HepG2 (cell line): ENCODE measurements at regions of chr1 and their contacts with region 1.

Region 1: DNA sequence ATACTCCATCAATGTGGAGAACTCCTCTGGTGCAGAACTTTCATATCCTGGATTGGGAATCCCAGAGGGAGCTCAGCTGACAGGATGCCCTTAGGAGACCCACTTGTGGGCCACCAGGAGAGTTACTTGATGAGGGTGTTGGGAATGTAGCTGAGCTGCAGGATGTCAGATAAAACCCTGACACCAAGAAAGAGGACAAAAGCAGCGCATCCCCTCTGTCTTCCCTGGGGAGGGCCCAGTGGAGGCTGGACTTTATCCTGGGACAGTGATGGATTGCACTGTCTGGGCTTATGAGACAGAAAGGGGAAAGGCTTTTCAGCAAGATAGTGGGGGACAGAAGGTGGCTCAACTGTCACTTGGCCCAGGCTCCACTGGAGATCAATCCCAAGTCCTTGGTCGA is 88.1 kb upstream of the BCAR3 start:
- DNase-seq: no peak
- ATAC-seq: no peak
- H3K4me3 ChIP-seq: no peak overlapping the region
- H3K27ac ChIP-seq: peak overlapping the region; percentile 65
- H3K4me1 ChIP-seq: peaks cover 52% of the 10 kb centered on the region
- H3K27me3 ChIP-seq: no peaks in the 10 kb centered on the region
- CTCF ChIP-seq: no peak
- EP300 ChIP-seq: no peak
- POLR2A ChIP-seq: no peak
- RAD21 ChIP-seq: no peak

Region 2: DNA sequence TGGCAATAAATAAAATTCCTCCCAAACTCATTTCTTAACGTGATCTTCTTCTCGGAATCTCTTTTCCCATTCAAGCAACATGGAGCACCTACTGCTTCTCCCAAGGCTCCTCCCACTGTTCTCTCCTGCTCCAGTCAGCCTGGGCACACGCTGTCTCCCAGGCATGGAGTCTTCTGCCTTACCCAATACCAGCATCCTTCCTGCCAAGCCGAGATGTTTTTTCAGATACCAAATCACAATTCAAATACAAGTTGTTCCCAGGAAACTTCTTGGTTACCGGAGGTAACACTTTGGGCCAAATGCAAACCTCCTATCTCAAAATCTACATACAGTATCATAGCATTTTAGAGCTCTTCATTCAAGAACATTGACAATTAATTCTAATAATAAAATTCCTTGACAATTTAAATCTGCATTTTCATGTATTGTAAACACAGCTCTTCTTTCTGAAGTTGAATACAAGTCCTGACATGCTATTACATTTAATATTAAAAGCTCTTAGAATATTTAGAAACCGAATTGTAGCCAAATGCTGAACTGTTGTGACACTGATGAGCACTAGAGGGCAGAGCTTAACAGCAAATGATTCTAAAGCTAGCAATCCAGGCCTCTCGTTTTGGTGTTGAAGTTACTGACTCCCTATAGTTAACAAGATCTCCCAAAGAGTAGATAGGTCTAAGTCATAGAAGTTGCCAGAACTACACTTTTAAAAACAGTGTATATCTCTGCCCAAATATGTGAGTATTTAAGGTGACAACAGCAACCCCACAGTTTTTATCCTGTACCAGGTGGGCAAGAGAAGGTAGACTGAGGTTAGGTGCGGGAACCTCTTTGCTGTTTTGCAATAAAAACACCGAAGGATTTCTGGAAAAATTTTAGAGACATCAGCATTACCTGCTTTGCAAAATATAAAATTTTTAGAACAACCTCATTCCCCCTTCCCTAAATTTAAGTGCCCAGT is 140.4 kb before region 1 on chr1:
- CTCF ChIA-PET with region 1: no interaction called
- POLR2A ChIA-PET with region 1: no interaction called
- in situ Hi-C with region 1: no loop called
- intact Hi-C with region 1: no loop called
- DNase-seq: peak; percentile 65
- ATAC-seq: peak; percentile 71
- H3K4me3 ChIP-seq: no peak overlapping the region
- H3K27ac ChIP-seq: no peak overlapping the region
- H3K4me1 ChIP-seq: peaks cover 26% of the 10 kb centered on the region
- H3K27me3 ChIP-seq: no peaks in the 10 kb centered on the region
- CTCF ChIP-seq: peak; percentile 84
- EP300 ChIP-seq: no peak
- POLR2A ChIP-seq: no peak
- RAD21 ChIP-seq: peak; percentile 89

Region 3: GRCh38 chr1:93743465-93743864 is 26.3 kb before region 1 on chr1:
- CTCF ChIA-PET with region 1: no interaction called
- POLR2A ChIA-PET with region 1: no interaction called
- in situ Hi-C with region 1: no loop called
- intact Hi-C with region 1: loop called (anchors 1 kb)
- DNase-seq: no peak
- ATAC-seq: no peak
- H3K4me3 ChIP-seq: no peak overlapping the region
- H3K27ac ChIP-seq: no peak overlapping the region
- H3K4me1 ChIP-seq: peaks cover 39% of the 10 kb centered on the region
- H3K27me3 ChIP-seq: no peaks in the 10 kb centered on the region
- CTCF ChIP-seq: no peak
- EP300 ChIP-seq: no peak
- POLR2A ChIP-seq: no peak
- RAD21 ChIP-seq: no peak

Region 4: DNA sequence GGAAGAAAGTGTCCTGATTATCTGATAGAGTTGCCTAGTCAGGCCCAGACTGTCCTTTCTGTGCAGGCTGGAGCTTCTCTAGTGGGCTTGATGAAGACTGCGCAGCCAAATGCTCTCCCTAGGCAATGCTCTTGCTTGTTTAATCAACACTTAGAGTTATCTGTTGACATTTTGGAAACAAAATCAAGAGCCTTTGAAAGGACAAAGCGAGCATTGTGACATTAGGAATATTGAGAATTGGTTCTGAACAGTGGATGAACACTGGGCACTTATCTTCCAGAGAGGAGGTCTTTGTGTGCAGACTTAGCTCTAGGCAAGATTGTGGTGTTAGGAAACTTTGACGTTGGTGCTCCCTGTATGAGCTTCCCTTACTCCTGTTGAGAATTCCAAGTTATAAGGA is 14.8 kb after region 1 on chr1:
- CTCF ChIA-PET with region 1: no interaction called
- POLR2A ChIA-PET with region 1: no interaction called
- in situ Hi-C with region 1: no loop called
- intact Hi-C with region 1: loop called (anchors 1 kb)
- DNase-seq: peak; percentile 76
- ATAC-seq: peak; percentile 94
- H3K4me3 ChIP-seq: no peak overlapping the region
- H3K27ac ChIP-seq: peak overlapping the region; percentile 42
- H3K4me1 ChIP-seq: peaks cover 42% of the 10 kb centered on the region
- H3K27me3 ChIP-seq: no peaks in the 10 kb centered on the region
- CTCF ChIP-seq: no peak
- EP300 ChIP-seq: peak in 1 of 2 experiments; percentile 28; a peak in 1 of 4 replicates
- POLR2A ChIP-seq: no peak
- RAD21 ChIP-seq: no peak

Region 5: GRCh38 chr1:93846211-93846991 is 76.6 kb after region 1 on chr1:
- CTCF ChIA-PET with region 1: no interaction called
- POLR2A ChIA-PET with region 1: no interaction called
- in situ Hi-C with region 1: no loop called
- intact Hi-C with region 1: no loop called
- DNase-seq: peak; percentile 76
- ATAC-seq: peak; percentile 83
- H3K4me3 ChIP-seq: peak overlapping the region; percentile 90 to 91 (median 91)
- H3K27ac ChIP-seq: peak overlapping the region; percentile 88
- H3K4me1 ChIP-seq: peaks cover 20% of the 10 kb centered on the region
- H3K27me3 ChIP-seq: no peaks in the 10 kb centered on the region; a peak in 1 of 5 replicates
- CTCF ChIP-seq: peak; percentile 56
- EP300 ChIP-seq: no peak
- POLR2A ChIP-seq: peak; percentile 69 to 77
- RAD21 ChIP-seq: no peak; the same call in 1 of the 2 replicates